Activated CD4-positive, alpha-beta memory T cell treated with anti-CD3 and anti-CD28 coated beads for 36 hours (primary cell): ENCODE measurements at regions of chr12 and their contacts with region 1.

Region 1: DNA sequence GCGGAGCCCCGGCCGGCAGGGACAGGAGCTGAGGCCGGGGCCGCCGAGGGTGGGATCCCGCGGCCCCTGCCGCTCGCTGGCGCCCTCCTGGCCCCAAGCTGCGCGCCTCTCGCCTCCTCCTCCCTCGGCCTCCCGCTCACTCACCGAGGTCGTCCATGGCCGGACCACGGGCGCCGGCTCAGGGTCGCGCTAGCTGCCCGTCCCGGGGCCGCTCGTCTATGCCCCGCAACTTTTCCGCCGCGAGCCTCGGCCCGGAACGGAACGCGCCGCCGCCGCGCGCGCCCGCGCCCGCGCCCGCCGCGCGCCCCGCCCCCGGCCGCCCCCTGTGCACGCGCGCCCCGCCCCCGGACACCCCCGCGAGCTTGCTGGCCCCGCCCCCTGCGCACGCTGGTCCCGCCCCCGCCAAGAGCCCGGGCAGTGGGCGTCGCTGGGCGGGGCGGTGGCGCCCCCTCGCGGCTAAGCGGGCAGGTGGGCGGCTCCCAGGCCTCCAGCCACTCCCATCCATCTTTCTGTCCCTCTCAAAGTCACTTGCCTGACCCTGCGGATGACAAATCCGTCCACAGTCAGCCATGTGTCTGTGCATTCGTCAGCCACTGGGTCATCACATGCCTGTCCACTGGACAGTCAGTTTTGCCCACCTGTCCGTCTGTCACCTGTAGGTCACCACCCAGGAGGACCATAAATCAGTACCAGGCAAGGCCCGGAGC is at the start of gene PXN:
- DNase-seq: peak; percentile 92
- H3K4me3 Mint-ChIP-seq: peak within 1 kb of the TSS; percentile 80
- H3K27ac Mint-ChIP-seq: peak within 1 kb of the TSS; percentile 66
- H3K4me1 Mint-ChIP-seq: peaks cover 38% of the 10 kb centered on the region
- H3K27me3 Mint-ChIP-seq: no peaks in the 10 kb centered on the region
- total RNA-seq, gene PXN: 74.0 to 75.0 TPM

Region 2: DNA sequence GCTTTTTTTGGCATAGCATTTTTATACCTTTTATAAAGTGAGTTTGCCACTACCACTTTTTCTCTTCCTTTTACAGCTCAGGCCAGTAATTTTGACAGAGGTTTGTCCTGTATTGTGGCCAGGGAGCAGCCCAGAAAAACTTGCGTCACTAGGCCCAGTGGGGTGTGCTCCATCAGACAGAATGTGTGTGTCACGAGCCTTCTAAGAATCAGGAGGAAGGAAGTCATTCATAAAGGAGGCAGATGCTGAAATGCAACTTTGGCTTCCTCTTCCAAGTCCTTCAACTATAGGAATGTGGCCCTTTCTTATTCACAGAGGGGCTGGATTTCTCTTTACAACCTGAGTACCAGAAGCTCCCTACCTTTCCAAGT is 139.0 kb before region 1 on chr12:
- CTCF ChIA-PET with region 1: no interaction called
- POLR2A ChIA-PET with region 1: no interaction called
- intact Hi-C with region 1: no loop called
- DNase-seq: peak; percentile 54
- H3K4me3 Mint-ChIP-seq: no peak overlapping the region
- H3K27ac Mint-ChIP-seq: peak overlapping the region; percentile 91
- H3K4me1 Mint-ChIP-seq: peaks cover 53% of the 10 kb centered on the region
- H3K27me3 Mint-ChIP-seq: no peaks in the 10 kb centered on the region

Region 3: DNA sequence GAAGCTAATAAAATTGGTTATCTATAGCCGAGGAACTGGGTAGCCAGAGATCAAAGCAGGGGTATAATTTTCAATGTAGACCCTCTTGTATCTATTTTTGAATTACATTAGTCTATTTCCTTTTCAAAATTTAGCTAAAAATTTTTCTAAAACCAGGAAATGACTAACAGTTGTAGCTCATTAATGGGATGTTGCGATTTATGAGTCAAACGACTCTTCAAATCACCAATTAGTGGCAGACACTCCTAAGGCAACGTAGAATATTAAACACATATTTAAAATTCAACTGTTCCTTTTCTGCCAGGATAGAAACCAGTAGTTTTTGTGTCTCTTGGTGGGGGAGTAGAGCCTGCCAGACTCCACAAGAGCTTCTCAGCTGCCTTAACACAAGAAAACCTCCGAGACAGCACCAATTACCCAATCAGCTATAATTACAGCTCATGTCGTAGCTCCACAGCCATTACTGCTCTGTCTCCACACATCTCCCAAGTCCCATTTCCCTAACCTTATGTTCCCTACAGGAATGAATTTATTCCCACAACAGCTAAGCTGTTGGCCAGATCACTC is 98.0 kb before region 1 on chr12:
- CTCF ChIA-PET with region 1: no interaction called
- POLR2A ChIA-PET with region 1: no interaction called
- intact Hi-C with region 1: no loop called
- DNase-seq: no peak
- H3K4me3 Mint-ChIP-seq: no peak overlapping the region
- H3K27ac Mint-ChIP-seq: no peak overlapping the region
- H3K4me1 Mint-ChIP-seq: no peaks in the 10 kb centered on the region
- H3K27me3 Mint-ChIP-seq: no peaks in the 10 kb centered on the region

Region 4: GRCh38 chr12:120194534-120195395 is 70.9 kb before region 1 on chr12 and contains the start of gene GCN1:
- CTCF ChIA-PET with region 1: interaction called, 36 read pairs
- POLR2A ChIA-PET with region 1: interaction called, 45 read pairs
- intact Hi-C with region 1: no loop called
- DNase-seq: peak; percentile 91
- H3K4me3 Mint-ChIP-seq: peak within 1 kb of the TSS; percentile 91
- H3K27ac Mint-ChIP-seq: peak within 1 kb of the TSS; percentile 98
- H3K4me1 Mint-ChIP-seq: peaks cover 51% of the 10 kb centered on the region
- H3K27me3 Mint-ChIP-seq: no peaks in the 10 kb centered on the region
- total RNA-seq, gene GCN1: 121 TPM

Region 5: DNA sequence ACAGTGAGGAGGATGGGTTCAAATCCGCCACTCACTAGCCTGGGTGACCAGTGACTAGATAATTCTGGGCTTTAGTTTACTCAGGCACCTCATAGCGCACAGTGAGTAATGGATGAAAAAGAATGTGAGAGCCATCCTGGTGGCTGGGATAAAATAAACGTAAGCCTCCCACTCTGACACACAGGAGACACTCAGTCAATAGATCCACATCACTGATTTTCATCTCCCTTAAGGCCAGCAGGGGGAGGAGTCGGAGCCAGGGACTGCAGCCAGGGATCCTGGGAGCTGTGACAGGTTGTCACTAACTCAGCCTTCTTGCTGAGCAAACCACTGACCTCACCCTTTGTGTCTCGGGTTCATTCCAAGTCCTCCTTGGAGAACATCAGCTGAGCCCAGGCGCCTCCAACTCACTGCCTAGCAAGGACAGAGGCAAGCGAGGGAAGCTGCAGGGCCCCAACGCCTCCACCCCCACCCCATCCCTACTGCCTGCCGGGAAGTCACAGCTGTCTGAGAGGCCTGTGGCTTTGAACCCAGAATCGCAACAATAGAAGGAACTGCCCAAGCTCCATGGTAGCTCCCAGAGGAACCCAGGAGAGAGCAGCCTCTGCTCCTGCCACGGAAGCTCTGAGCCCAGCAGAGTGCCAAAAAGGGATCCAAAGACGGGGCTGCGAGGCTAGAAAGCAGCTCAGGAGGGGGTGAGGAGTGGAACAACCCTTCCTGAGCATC is 30.8 kb before region 1 on chr12:
- CTCF ChIA-PET with region 1: interaction called, 614 read pairs
- POLR2A ChIA-PET with region 1: interaction called, 20 read pairs
- intact Hi-C with region 1: no loop called
- DNase-seq: peak; percentile 35
- H3K4me3 Mint-ChIP-seq: no peak overlapping the region
- H3K27ac Mint-ChIP-seq: peak overlapping the region; percentile 62
- H3K4me1 Mint-ChIP-seq: peaks cover 86% of the 10 kb centered on the region
- H3K27me3 Mint-ChIP-seq: no peaks in the 10 kb centered on the region

Region 6: GRCh38 chr12:120242275-120242799 is 23.3 kb before region 1 on chr12:
- CTCF ChIA-PET with region 1: interaction called, 57 read pairs
- POLR2A ChIA-PET with region 1: interaction called, 4 read pairs
- intact Hi-C with region 1: no loop called
- DNase-seq: no peak
- H3K4me3 Mint-ChIP-seq: no peak overlapping the region
- H3K27ac Mint-ChIP-seq: no peak overlapping the region
- H3K4me1 Mint-ChIP-seq: peaks cover 67% of the 10 kb centered on the region
- H3K27me3 Mint-ChIP-seq: no peaks in the 10 kb centered on the region

Region 7: DNA sequence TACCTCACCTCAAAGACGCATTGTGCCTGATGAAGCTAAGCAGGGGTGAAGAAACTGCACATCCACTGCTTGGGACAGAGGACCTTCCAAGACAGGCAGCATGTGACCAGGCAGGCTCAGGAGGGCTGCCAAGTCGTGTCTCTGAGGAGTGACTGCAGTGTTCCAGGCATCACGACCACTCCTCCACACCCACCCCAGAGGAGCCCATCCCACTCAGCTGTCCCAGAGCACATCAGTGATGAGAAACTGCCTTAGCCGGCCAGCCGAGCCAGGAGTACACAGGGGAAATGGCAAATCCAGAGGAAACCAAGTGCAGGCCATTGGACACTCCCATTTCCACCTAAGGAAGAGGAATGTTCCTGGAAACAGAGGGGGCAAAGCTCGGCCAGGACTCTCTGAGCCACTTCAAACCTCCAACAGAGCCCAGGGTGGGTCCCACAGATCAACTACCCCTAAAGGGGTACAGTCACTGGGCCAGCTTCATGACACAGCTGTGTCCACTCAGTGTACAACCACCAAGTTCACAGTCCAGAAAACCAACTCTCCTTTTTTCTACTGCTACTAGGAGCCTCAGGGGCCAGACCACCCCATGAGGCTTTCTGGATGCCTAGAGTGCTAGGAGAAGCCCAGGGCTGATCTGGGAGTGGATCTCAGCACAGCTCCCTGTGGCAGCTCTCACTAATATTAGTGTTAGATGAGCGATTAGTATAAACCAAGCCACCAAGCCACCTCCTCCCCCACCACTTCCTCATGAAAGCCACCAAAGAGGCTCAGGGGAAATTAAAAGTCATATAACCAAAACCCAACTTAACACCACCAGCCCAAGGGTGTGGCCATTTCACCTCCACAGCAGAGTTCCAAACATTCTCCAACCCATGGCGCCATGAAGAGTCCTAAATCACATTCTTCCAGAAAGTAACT is 15.5 kb before region 1 on chr12:
- CTCF ChIA-PET with region 1: interaction called, 31 read pairs
- POLR2A ChIA-PET with region 1: interaction called, 11 read pairs
- intact Hi-C with region 1: loop called (anchors 1 kb)
- DNase-seq: peak; percentile 64
- H3K4me3 Mint-ChIP-seq: peak overlapping the region; percentile 39
- H3K27ac Mint-ChIP-seq: peak overlapping the region; percentile 81
- H3K4me1 Mint-ChIP-seq: peaks cover 78% of the 10 kb centered on the region
- H3K27me3 Mint-ChIP-seq: no peaks in the 10 kb centered on the region